HEK293T (cell line): ENCODE measurements at regions of chr14 and their contacts with region 1.

Region 1: DNA sequence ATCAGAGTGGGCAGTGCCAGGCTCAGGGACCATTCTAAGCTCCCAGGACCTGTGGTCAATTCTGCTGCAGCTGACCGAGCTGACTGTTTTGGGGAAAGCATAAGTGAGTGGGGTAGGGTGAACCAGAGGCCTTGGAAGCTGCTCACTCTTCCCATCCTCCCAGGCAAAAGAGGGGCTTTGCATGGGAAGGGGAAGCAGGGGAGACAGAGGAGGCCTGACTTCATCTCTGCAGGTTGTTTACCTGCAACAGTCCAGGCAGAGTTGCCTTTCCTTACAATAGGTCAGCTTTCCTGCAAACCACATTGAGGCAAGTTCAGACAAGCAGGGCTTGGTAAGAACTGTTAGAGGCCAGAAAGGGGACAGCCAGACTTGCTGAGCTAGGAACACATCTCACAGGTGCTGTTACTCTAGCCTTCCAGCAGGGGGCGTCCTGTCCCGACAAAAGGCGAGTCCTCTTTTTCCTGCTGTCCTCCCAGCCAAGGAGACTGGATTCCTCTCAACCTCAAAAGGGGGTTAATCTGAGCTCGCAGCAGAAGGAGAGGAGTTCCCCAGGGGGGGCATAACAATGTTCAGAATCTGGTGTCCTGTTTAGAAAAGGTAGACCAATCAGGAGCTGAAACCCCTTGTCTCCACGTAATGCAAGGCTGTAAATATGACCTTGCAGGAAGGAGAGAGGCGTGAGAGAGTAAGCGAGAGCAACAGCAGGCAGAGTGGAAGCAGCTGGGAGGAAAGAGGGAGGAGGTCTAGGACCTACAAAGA is 4.3 kb upstream of the DHRS2 start:
- DNase-seq: peak; percentile 85

Region 2: DNA sequence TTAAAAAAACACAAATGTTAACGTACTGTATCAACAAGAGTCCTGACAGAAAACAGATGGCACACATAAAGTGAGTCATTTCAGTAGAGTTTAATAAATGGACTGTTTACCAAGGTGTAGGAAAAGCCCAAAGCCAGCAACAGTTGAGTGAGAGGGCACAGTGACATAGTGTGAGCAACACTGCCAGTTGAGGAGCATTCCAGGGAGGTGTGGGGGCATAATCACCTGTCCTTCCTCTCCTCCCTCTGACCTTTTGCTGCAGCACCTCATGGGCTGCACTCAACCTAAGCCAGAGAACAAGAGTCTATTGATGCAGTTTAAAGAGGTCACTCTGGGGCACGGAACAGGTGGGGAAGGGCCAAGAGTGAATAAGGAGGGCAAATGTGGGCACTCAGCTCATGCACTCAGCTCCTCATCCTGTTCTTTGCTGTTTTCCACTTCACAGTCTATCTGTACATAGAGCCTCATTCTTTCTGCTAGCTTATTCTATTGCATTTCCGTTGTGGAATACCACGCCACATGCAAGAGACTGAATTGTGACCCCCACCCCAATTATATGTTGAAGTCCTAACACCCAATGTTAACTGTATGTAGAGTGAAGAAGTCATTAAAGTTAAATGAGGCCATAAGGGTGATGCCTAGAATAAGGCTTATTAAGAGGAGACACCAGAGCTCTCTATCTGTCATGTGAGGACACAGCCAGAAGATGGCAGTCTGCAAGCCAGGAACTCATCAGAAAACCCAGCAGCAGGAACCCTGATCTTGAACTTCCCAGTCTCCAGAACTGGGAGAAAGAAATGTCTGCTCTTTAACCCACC is 33.7 kb after region 1 on chr14:
- CTCF ChIA-PET with region 1: interaction called, 10 read pairs
- POLR2A ChIA-PET with region 1: no interaction called
- DNase-seq: peak; percentile 27

Region 3: GRCh38 chr14:23910101-23910875 is 278.4 kb after region 1 on chr14:
- CTCF ChIA-PET with region 1: interaction called, 26 read pairs
- POLR2A ChIA-PET with region 1: no interaction called
- DNase-seq: peak; percentile 80